Heart left ventricle (tissue), 16 donors: ENCODE measurements at regions of chr16 and their contacts with region 1.

Region 1: DNA sequence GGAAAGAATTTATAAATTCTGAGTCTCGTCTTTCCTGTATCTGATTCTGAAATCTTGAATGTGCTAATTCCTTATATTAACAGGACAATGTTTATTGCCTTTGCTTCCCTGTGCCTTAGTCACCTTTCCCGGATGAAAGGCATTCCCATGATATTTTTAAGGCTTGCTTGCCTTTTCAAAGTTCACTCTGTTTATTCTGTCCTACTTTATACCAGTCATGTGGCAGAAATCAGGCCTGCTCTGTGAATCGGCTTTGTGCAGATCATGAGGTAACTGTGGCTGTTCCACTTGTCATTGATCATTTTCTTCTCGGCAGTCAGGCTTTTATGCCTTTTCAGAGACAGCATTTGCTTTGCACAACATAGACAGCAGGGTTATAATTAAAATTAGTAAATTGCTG is 28.8 kb upstream of the ABCC11 start:
- DNase-seq: no peak
- ATAC-seq: peak in 2 of 4 donors; percentile 17 to 42
- H3K4me3 ChIP-seq: no peak overlapping the region
- H3K27ac ChIP-seq: peak overlapping the region in 9 of 12 donors; percentile 1 to 45 (median 17)
- H3K4me1 ChIP-seq: peaks cover 6 to 63% (median 34%) of the 10 kb centered on the region in 12 donors
- H3K27me3 ChIP-seq: no peaks in the 10 kb centered on the region
- CTCF ChIP-seq: no peak
- POLR2A ChIP-seq: no peak

Region 2: GRCh38 chr16:48244080-48244862 is 31.8 kb before region 1 on chr16 and contains the start of gene LONP2:
- intact Hi-C with region 1: loop called in 1 of 10 experiments (anchors 5 kb)
- DNase-seq: peak; percentile 91 to 95 (median 93)
- ATAC-seq: peak; percentile 97 to 100 (median 100)
- H3K4me3 ChIP-seq: peak within 1 kb of the TSS; percentile 70 to 99 (median 90)
- H3K27ac ChIP-seq: peak within 1 kb of the TSS; percentile 54 to 90 (median 88)
- H3K4me1 ChIP-seq: peaks cover 11 to 42% (median 31%) of the 10 kb centered on the region in 12 donors
- H3K27me3 ChIP-seq: no peaks in the 10 kb centered on the region
- CTCF ChIP-seq: no peak
- POLR2A ChIP-seq: peak in 1 of 2 donors; percentile 74
- total RNA-seq, gene LONP2: 42.8 to 87.4 (median 69.3) TPM